Endothelial cell of umbilical vein (primary cell): ENCODE measurements at regions of chr19 and their contacts with region 1.

Region 1: GRCh38 chr19:45485305-45486077 is 11.4 kb downstream of the RTN2 start:
- DNase-seq: peak; percentile 85
- H3K4me3 ChIP-seq: peak overlapping the region; percentile 56 to 66 (median 61)
- H3K27ac ChIP-seq: peak overlapping the region; percentile 19
- H3K4me1 ChIP-seq: no peaks in the 10 kb centered on the region
- H3K27me3 ChIP-seq: no peaks in the 10 kb centered on the region
- CTCF ChIP-seq: peak; percentile 79 to 96
- POLR2A ChIP-seq: no peak

Region 2: GRCh38 chr19:45331423-45331822 is 154.1 kb before region 1 on chr19:
- CTCF ChIA-PET with region 1: no interaction called
- POLR2A ChIA-PET with region 1: no interaction called
- dilution Hi-C with region 1: no loop called
- intact Hi-C with region 1: no loop called
- DNase-seq: no peak
- H3K4me3 ChIP-seq: no peak overlapping the region
- H3K27ac ChIP-seq: no peak overlapping the region
- H3K4me1 ChIP-seq: peaks cover 3% of the 10 kb centered on the region
- H3K27me3 ChIP-seq: no peaks in the 10 kb centered on the region
- CTCF ChIP-seq: no peak
- POLR2A ChIP-seq: no peak

Region 3: DNA sequence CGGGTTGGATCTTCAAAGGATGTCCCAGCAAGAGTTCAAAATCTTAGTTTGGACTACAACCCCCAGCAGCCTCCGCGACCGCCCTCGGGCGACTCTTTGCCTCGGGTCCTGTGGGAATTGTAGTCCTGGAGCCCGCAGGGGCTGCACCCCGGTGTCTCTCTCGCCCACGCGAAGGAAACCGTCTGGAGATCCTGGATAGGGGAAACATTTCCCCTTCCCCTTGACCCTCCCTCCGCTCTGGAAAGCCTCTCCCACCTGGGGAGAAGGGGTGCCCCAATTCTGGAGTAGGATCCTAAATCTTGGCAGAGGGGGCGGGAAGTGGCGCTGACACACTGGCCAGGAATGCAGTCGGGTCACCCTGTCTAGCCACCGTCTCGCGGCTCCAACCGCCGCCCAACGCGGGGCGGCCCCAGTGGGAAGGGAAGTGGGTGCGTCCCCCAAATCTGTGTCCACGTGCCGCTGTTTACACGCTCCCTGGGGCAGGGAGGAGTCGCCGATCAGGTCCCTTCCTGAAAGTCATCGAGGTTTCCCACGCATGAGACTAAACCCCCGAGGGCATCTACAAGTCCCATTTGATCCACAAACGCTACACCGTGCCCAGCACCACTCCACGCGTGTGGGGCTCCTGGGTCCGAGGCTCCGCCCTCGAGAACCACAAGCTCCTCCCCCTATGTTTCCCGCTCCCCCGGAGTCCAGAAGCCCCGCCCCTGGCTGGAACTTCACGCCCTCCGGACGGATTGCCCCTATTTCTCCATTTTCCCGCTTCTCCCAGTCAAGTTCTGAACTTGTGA is 79.9 kb before region 1 on chr19:
- CTCF ChIA-PET with region 1: interaction called, 101 read pairs
- POLR2A ChIA-PET with region 1: no interaction called
- dilution Hi-C with region 1: no loop called
- intact Hi-C with region 1: no loop called
- DNase-seq: peak; percentile 93
- H3K4me3 ChIP-seq: peak overlapping the region; percentile 73 to 83 (median 81)
- H3K27ac ChIP-seq: peak overlapping the region; percentile 88
- H3K4me1 ChIP-seq: peaks cover 27% of the 10 kb centered on the region
- H3K27me3 ChIP-seq: no peaks in the 10 kb centered on the region
- CTCF ChIP-seq: no peak
- POLR2A ChIP-seq: peak; percentile 43

Region 4: GRCh38 chr19:45439569-45440254 is 45.8 kb before region 1 on chr19:
- CTCF ChIA-PET with region 1: interaction called, 891 read pairs
- POLR2A ChIA-PET with region 1: no interaction called
- dilution Hi-C with region 1: no loop called
- intact Hi-C with region 1: no loop called
- DNase-seq: peak; percentile 65
- H3K4me3 ChIP-seq: peak overlapping the region; percentile 48 to 64 (median 52)
- H3K27ac ChIP-seq: peak overlapping the region; percentile 59
- H3K4me1 ChIP-seq: peaks cover 15% of the 10 kb centered on the region
- H3K27me3 ChIP-seq: no peaks in the 10 kb centered on the region
- CTCF ChIP-seq: peak; percentile 88 to 99
- POLR2A ChIP-seq: no peak

Region 5: GRCh38 chr19:45496349-45496953 is 11.0 kb after region 1 on chr19:
- CTCF ChIA-PET with region 1: interaction called, 38 read pairs
- POLR2A ChIA-PET with region 1: no interaction called
- dilution Hi-C with region 1: no loop called
- intact Hi-C with region 1: no loop called
- DNase-seq: peak; percentile 29
- H3K4me3 ChIP-seq: peak overlapping the region; percentile 31 to 55 (median 40)
- H3K27ac ChIP-seq: no peak overlapping the region
- H3K4me1 ChIP-seq: peaks cover 27% of the 10 kb centered on the region
- H3K27me3 ChIP-seq: peaks cover 8 to 16% of the 10 kb centered on the region in 2 experiments
- CTCF ChIP-seq: no peak
- POLR2A ChIP-seq: no peak

Region 6: GRCh38 chr19:45523642-45524256 is 38.3 kb after region 1 on chr19:
- CTCF ChIA-PET with region 1: interaction called, 10 read pairs
- POLR2A ChIA-PET with region 1: no interaction called
- dilution Hi-C with region 1: no loop called
- intact Hi-C with region 1: no loop called
- DNase-seq: peak; percentile 86
- H3K4me3 ChIP-seq: no peak overlapping the region
- H3K27ac ChIP-seq: no peak overlapping the region
- H3K4me1 ChIP-seq: no peaks in the 10 kb centered on the region
- H3K27me3 ChIP-seq: no peaks in the 10 kb centered on the region
- CTCF ChIP-seq: peak; percentile 82 to 92
- POLR2A ChIP-seq: peak; percentile 46

Region 7: DNA sequence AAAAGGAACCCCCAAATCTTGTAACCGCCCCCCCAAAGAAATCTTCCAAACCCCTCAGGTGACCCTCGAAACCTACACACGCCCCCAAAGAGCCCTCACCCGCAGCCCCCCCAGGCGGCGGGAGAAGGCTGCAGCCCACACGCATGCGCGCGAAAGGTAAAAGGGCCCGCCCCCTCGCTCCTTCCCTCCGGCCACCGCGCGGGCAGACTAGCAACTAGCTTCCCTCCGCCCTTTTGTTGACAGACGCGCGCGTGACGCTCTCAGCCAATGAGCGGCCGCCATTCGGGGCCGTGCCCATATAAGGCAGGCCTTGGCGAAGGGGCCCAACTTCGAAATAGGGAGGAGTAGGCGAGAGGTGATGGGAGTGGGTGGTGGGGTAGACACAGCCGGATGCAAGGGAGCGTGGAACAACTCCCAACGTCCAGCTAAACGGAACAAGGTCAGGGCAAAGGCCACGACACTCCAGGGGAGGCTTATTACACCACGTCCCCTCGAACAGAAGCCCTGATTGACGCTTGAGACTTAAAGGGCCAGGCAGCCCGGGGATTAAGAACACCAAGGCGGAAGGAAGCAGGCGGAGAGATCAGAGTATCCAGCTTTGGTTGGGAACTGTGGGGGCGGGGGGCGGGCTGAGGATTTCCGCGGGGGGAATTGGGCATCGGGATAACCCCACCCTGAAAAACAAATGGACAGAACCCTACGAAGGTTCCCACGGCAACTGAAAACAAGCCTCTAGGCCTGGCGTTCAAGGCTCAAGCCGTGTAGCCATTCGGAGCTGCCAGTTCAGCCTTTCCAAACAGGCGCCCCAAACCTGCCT is 231.9 kb after region 1 on chr19:
- CTCF ChIA-PET with region 1: no interaction called
- POLR2A ChIA-PET with region 1: no interaction called
- dilution Hi-C with region 1: no loop called
- intact Hi-C with region 1: no loop called
- DNase-seq: peak; percentile 100
- H3K4me3 ChIP-seq: peak overlapping the region; percentile 54 to 93 (median 61)
- H3K27ac ChIP-seq: peak overlapping the region; percentile 43
- H3K4me1 ChIP-seq: peaks cover 20% of the 10 kb centered on the region
- H3K27me3 ChIP-seq: no peaks in the 10 kb centered on the region
- CTCF ChIP-seq: peak in 1 of 2 donors; percentile 33
- POLR2A ChIP-seq: no peak